ENCODE measurements at regions of chr1 and their contacts with region 1.

Region 1: DNA sequence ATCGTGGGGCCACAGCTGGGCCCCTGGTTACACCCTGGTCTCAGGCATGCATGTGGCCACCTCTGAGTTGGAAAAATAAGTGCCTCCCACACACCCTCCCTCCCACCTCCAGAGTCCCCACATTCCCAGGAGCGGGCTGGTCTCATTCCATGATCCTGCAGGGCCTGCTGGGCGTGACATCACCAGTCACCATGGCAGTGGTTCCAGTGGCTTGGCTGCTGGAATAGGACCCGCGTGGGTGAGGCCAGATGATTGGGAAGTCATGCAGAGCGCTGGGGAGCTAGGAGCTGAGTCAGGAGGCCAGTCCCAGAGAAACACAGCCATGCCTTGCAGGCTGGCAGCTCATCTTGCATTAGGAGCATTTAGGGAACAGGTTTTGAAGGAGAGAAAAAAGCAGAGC is 125.4 kb upstream of the TMEM51 start:
- DNase-seq: no peak
- ATAC-seq: no peak

Region 2: GRCh38 chr1:14923727-14924452 is 104.2 kb before region 1 on chr1:
- intact Hi-C with region 1: loop called in 1 of 2 experiments (anchors 10 kb)
- DNase-seq: peak; percentile 66 to 74
- ATAC-seq: peak; percentile 83

Region 3: GRCh38 chr1:15352123-15352957 is 324.2 kb after region 1 on chr1:
- intact Hi-C with region 1: no loop called
- DNase-seq: peak; percentile 46 to 73
- ATAC-seq: peak; percentile 60

Measured in left colon (tissue), 2 donors.